Vagina (tissue), 2 donors: ENCODE measurements at regions of chr1 and their contacts with region 1.

Region 1: DNA sequence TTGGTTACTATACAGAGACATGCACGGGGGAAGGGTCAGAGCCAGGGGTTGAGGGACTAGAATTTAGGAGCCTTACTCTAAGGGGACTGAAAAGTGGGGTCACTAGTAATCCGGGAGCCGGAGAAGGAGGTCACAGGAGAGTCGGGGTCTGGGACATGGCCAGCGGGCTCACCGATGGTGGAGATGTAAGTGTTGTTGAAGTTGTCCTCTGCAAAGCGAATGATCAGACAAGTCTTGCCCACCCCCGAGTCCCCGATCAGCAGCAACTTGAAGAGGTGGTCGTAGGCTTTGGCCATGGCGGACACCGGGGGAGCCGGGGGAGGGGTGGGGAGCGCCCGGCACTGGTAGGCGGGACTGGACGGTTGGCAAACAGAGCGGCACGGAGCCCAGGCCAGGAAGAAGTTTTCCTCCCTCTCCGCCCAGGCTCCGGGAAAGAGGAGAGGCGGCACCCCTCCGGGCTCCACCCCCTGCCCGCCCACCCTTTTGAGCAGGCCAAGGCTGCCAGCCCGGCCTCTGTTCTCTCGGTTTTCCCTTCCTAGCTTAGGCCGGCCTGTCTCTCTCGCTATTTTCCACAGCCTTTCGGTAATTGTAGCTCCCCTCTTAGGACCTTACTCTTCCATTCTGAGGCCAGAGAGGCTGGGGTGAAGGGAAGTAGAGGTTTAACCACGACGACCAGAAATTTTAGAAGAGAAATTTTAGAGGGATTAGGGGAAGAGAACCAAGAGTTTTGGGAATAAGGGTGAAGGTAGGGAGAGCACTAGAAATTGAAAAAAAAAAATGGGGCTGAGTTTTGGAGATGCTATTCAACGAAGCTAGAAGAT is at the start of gene RAB13:
- DNase-seq: peak in 1 of 2 donors; percentile 97
- H3K4me3 ChIP-seq: peak within 1 kb of the TSS; percentile 60 to 64
- H3K27ac ChIP-seq: peak within 1 kb of the TSS; percentile 95
- H3K4me1 ChIP-seq: peaks cover 25% of the 10 kb centered on the region
- H3K27me3 ChIP-seq: no peaks in the 10 kb centered on the region
- CTCF ChIP-seq: no peak
- POLR2A ChIP-seq: peak in 1 of 2 donors; percentile 30
- total RNA-seq, gene RAB13: 49.8 TPM

Region 2: DNA sequence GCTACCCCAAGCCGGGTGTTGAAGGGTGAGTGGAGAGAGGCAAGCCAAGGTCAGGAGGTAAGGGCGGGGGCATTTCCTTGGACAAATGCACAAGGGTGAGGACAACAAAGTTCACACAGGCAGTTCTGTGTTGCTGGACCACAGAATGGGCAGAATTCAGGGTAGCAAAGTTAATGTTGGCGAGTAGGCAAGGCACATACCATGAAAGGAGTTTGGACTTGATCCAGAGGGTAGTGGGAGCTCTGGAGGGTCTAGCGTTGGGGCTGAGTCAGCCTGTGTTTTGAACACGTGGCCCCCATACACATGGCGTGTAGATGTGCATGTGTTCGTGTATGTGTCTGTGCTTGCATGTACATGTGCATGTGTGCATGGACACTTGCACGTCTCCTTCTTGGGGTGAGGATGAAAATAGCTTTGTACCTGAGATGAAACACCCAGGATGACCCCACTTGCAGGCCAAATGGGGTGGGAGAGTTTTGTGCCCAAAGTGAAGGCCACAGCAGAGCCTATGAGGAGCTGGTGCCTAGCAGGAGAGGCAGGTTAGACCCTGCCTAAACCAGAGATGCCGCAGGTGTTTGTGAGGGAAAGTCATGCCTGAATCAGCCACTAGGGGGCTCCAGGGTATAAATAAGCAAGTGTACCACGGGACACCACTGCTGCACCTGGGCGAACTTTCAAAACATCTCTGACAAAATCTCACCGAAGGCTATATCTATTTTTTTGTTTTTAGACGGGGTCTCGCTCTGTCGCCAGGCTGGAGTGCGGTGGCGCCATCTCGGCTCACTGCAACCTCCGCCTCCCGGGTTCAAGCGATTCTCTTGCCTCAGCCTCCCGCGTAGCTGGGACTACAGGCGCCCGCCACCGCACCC is 189.1 kb before region 1 on chr1:
- intact Hi-C with region 1: loop called (anchors 5 kb)
- DNase-seq: no peak
- H3K4me3 ChIP-seq: no peak overlapping the region
- H3K27ac ChIP-seq: no peak overlapping the region
- H3K4me1 ChIP-seq: no peaks in the 10 kb centered on the region
- H3K27me3 ChIP-seq: no peaks in the 10 kb centered on the region
- CTCF ChIP-seq: peak; percentile 81 to 91 (median 82)
- POLR2A ChIP-seq: no peak

Region 3: DNA sequence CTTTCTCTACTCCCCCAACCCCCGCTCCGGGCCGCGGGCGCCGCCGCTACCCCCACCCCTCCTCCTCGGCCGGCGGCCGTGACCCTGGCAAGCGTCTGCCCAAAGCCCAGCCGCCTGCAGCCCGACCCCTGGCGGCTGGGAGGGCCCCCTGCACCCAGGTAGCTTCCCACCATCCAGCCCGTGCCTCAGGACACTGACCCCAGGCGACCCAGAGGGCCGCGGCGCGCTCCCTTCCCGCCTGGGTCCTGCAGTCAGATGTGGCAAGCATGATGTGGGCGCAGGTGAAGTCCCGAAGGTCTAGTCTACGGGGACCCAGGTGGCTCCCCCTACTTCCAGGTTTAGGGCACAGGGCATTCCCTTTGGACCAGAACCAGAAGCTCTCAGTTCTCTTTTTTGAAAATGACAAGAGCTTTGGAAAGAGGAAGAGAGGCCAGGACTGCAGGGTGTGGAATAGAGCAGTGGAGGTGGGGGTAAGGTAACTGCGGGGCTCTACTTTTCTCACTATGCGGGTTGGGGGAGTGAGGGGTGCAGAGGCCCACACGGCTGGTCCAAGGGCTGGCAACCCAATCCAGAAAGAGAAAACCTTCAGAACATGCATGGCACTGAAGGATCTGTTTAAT is 39.4 kb before region 1 on chr1 and contains the start of gene DENND4B:
- intact Hi-C with region 1: loop called (anchors 5 kb)
- DNase-seq: no peak
- H3K4me3 ChIP-seq: peak within 1 kb of the TSS; percentile 73 to 89
- H3K27ac ChIP-seq: peak within 1 kb of the TSS; percentile 99
- H3K4me1 ChIP-seq: peaks cover 27% of the 10 kb centered on the region
- H3K27me3 ChIP-seq: no peaks in the 10 kb centered on the region
- CTCF ChIP-seq: peak; percentile 84 to 90 (median 86)
- POLR2A ChIP-seq: no peak
- total RNA-seq, gene DENND4B: 42.7 TPM